MCF 10A (cell line): ENCODE measurements at regions of chr3 and their contacts with region 1.

Region 1: GRCh38 chr3:180802837-180803236 is 109.6 kb upstream of the FXR1 start:
- DNase-seq: peak; percentile 46
- H3K4me3 Mint-ChIP-seq: no peak overlapping the region
- H3K27ac Mint-ChIP-seq: no peak overlapping the region
- H3K4me1 Mint-ChIP-seq: no peaks in the 10 kb centered on the region
- H3K27me3 Mint-ChIP-seq: no peaks in the 10 kb centered on the region
- CTCF ChIP-seq: peak; percentile 48

Region 2: DNA sequence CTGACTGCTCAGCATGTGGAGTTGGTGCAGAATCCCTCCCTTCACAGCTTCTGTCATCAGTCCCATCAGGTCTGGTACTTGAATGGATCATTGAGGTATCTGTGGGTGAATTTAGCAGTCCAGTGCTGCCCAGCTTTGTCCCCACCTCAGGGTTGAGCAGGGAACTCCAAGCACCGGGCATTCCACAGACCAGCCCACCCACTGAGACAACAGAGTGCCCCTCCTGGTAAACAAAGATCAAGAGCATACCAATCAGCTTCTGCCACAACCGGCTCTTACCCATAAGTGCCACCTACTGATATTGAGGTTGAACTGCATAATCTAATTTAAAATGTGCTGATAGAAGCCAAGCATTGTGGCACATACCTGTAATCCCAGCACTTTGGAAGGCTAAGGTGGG is 52.5 kb after region 1 on chr3:
- CTCF ChIA-PET with region 1: interaction called, 8 read pairs
- POLR2A ChIA-PET with region 1: no interaction called
- intact Hi-C with region 1: loop called (anchors 1 kb)
- DNase-seq: peak; percentile 32
- H3K4me3 Mint-ChIP-seq: no peak overlapping the region
- H3K27ac Mint-ChIP-seq: no peak overlapping the region
- H3K4me1 Mint-ChIP-seq: no peaks in the 10 kb centered on the region
- H3K27me3 Mint-ChIP-seq: peaks cover 11% of the 10 kb centered on the region
- CTCF ChIP-seq: peak; percentile 31

Region 3: DNA sequence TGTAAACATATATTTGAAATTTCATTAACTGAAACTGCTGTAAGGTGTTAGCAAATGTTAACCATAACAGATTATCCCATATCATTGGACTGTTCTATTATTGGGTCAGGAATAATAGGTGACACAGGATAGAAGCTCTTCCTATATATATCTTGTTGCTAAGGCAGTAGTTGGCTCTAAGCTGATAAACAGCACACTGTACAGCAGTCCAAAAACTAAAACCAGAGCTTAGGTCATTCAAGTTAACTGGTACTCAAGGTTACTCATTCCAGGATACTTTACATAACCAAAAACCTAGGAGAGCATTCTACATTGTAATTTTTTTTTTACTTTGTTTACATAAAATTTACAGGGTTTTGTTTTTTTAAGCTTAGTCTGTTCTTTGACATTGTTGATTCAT is 177.8 kb after region 1 on chr3:
- CTCF ChIA-PET with region 1: no interaction called
- POLR2A ChIA-PET with region 1: interaction called, 3 read pairs
- intact Hi-C with region 1: loop called (anchors 5 kb)
- DNase-seq: no peak
- H3K4me3 Mint-ChIP-seq: no peak overlapping the region
- H3K27ac Mint-ChIP-seq: no peak overlapping the region
- H3K4me1 Mint-ChIP-seq: no peaks in the 10 kb centered on the region
- H3K27me3 Mint-ChIP-seq: no peaks in the 10 kb centered on the region
- CTCF ChIP-seq: no peak

Region 4: DNA sequence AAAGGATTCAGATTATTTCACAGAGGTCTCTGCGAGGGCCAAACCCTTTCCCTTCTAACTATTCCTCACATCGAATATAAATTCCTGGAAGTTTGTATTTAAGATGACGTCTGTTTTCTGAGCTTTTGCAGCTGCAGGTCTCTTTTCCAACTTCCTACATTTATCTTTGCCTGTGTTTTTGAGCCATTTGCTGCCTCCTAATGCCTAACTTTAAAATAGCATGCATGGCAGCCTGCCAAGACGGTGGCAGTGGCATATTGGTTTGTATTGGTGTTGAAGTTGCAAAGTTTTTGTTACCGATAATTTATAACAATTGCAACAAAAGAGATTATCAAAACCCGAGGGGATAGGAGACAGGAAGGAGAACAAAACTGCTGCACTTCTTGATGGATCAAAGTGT is 373.8 kb after region 1 on chr3:
- CTCF ChIA-PET with region 1: interaction called, 11 read pairs
- POLR2A ChIA-PET with region 1: no interaction called
- intact Hi-C with region 1: loop called (anchors 1 kb)
- DNase-seq: peak; percentile 77
- H3K4me3 Mint-ChIP-seq: no peak overlapping the region
- H3K27ac Mint-ChIP-seq: no peak overlapping the region
- H3K4me1 Mint-ChIP-seq: peaks cover 5% of the 10 kb centered on the region
- H3K27me3 Mint-ChIP-seq: no peaks in the 10 kb centered on the region
- CTCF ChIP-seq: peak; percentile 45